Gastrocnemius medialis (tissue), 4 donors: ENCODE measurements at regions of chr4 and their contacts with region 1.

Region 1: DNA sequence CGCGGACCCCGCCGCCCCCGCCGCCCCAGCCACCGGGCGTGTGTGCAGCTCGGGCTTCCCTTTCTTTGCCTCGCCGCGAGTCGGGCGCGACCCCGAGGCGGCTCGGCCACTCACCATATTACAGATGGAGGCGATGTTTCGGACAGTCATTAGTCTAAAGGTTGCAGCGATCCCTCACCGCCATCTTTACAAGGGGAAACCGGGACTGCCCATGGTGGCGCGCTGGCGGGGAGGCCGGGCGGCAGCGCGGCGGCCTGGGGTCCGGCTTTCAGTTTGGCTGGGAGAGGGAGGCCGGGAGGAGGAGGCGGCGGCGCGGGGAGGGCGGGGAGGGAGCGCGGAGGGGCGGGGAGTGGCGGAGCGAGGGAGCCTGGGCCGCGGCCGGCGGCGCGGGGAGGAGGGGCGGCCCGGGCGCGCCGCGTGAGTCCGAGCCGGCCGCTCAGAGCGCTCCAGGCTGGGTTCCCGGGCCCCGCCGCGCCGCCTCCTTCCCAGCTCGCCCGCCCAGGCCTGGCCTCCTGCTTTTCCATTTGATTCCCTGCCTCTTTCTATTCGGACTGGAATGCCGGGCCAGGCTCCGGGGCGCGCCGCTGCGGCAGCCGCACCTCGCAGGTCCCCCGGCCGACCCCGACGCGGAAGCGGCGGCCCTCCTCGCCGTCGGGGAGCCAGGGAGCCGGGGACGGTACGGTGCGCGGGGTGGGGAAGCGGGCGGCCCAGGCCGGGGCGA is at the start of gene USP46:
- DNase-seq: peak; percentile 60 to 64
- ATAC-seq: peak; percentile 68 to 73
- H3K4me3 ChIP-seq: peak within 1 kb of the TSS; percentile 58 to 96 (median 78)
- H3K27ac ChIP-seq: peak within 1 kb of the TSS; percentile 89 to 99 (median 91)
- H3K4me1 ChIP-seq: peaks cover 34 to 41% of the 10 kb centered on the region in 2 donors
- H3K27me3 ChIP-seq: no peaks in the 10 kb centered on the region
- CTCF ChIP-seq: no peak
- POLR2A ChIP-seq: peak; percentile 65 to 68
- total RNA-seq, gene USP46: 8.9 to 13.2 (median 11.8) TPM

Region 2: GRCh38 chr4:52376132-52376704 is 282.9 kb before region 1 on chr4:
- in situ Hi-C with region 1: no loop called
- intact Hi-C with region 1: loop called (anchors 5 kb)
- DNase-seq: no peak
- ATAC-seq: no peak
- H3K4me3 ChIP-seq: no peak overlapping the region
- H3K27ac ChIP-seq: no peak overlapping the region
- H3K4me1 ChIP-seq: no peaks in the 10 kb centered on the region
- H3K27me3 ChIP-seq: no peaks in the 10 kb centered on the region
- CTCF ChIP-seq: peak; percentile 32 to 63 (median 42)
- POLR2A ChIP-seq: no peak

Region 3: DNA sequence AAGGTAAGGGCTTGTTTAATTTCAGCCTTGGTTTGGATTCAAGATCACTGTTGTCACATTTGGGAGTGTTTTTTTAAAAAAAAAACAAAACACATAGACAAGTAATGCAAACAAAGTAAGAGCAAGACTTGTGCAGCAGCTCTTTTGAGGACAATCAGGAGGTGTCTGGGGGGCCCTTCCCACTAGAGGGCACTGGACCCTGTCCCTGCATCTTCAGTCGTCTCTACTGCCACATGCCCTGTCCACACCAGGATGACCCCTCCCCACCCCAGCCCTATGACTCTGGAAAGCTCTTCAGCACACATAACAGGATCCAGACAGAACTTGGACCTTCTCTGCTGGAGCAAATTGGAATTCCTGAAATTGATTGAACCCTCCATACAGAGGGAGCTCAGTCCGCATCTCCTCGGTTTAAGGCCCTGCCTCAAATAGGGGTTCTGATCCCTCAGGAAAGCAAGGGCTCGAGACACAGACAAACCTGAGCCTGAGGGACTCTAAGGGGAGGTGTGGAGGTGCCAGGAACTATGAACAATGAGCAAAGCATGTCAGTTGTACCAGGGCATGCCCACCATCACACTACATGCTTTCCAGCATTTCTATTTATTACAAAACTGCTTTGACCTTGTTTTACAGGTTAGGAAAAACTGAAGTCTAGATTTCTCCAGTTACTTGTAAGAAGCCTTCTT is 70.9 kb before region 1 on chr4:
- in situ Hi-C with region 1: no loop called
- intact Hi-C with region 1: loop called (anchors 2 kb)
- DNase-seq: peak in 1 of 2 donors; percentile 30
- ATAC-seq: peak in 1 of 2 donors; percentile 42
- H3K4me3 ChIP-seq: no peak overlapping the region
- H3K27ac ChIP-seq: no peak overlapping the region
- H3K4me1 ChIP-seq: no peaks in the 10 kb centered on the region
- H3K27me3 ChIP-seq: no peaks in the 10 kb centered on the region
- CTCF ChIP-seq: peak; percentile 18 to 63 (median 49)
- POLR2A ChIP-seq: no peak

Region 4: DNA sequence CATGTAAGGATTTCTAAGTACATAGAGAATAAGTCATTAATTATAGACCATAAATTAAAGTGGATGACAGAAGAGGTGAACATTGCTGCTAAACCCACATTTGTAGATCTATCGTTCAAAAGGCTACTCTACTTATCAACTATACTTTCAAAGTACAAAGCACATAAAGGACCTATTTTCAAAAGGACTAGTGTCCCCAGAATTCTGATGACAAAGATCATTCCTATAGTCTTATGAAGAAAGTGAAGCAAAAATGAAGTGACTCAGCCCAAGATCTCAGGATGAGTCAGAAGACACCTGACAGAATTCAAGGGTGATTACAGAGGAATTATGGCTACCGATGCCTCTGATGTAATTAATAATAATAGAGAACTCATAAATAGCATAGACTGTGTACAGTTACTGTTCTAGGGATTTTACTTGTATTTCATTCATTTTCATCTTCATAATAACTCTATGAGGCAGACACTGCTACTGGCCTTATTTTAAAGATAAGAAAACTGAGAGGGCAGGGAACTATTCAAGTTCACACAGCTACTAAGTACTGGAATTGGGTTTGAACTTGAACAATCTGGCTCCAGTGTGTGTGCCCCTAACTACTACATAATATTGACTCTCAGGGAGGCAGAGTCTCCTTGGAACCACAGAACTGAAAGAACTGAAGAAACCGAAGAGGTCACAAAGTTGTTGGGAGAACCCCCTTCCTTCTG is 17.2 kb before region 1 on chr4:
- in situ Hi-C with region 1: no loop called
- intact Hi-C with region 1: loop called (anchors 2 kb)
- DNase-seq: no peak
- ATAC-seq: no peak
- H3K4me3 ChIP-seq: no peak overlapping the region
- H3K27ac ChIP-seq: peak overlapping the region in 1 of 4 donors; percentile 22
- H3K4me1 ChIP-seq: peaks cover 39 to 46% of the 10 kb centered on the region in 2 donors
- H3K27me3 ChIP-seq: no peaks in the 10 kb centered on the region
- CTCF ChIP-seq: no peak
- POLR2A ChIP-seq: no peak

Region 5: DNA sequence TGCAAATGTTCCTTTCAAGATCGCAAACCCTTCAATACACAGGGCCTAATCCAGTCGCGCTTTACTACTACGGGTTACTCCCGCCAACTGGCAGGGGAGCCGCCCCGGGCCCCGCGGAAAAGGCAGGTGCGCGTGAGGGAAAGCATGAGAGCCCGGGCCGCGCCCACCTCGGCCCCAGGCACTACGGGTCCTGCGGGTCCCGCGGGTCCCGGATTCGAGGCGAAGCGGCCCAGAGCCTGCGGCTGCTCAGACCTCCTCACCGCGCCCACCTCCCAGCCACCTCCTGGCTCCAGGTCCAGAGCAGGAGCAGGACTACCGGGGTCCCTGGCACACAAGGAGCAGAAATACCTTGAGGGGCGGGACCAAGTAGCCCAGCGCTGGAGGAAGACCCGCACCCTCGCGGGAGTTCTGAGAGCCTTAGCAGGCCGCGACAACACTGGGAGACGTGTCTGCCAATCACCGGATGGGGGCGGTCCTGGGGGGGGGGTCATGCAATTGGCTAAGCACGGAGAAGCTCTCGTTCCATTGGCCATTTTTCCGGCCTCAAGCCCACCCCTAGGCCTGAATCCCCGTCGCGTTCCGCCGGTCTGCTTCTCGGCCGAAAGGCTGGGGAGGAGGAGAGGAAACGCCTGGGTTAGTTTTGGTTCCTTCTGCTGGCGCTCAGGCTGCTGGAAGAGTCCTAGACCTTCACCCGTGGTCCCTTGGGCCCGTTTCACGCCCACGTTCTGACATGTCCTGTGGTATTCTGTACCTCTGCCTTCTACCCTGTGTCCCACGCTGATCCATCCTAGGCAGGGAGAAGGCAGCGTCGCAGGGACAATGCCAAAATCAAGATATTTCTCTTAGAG is 63.0 kb after region 1 on chr4:
- in situ Hi-C with region 1: loop called in 2 of 4 experiments (anchors 10 kb)
- intact Hi-C with region 1: loop called (anchors 2 kb)
- DNase-seq: peak; percentile 93 to 94
- ATAC-seq: peak; percentile 99
- H3K4me3 ChIP-seq: peak overlapping the region; percentile 74 to 96 (median 79)
- H3K27ac ChIP-seq: peak overlapping the region; percentile 83 to 96 (median 92)
- H3K4me1 ChIP-seq: peaks cover 7% of the 10 kb centered on the region in 2 donors
- H3K27me3 ChIP-seq: no peaks in the 10 kb centered on the region
- CTCF ChIP-seq: no peak
- POLR2A ChIP-seq: peak; percentile 32 to 61

Region 6: DNA sequence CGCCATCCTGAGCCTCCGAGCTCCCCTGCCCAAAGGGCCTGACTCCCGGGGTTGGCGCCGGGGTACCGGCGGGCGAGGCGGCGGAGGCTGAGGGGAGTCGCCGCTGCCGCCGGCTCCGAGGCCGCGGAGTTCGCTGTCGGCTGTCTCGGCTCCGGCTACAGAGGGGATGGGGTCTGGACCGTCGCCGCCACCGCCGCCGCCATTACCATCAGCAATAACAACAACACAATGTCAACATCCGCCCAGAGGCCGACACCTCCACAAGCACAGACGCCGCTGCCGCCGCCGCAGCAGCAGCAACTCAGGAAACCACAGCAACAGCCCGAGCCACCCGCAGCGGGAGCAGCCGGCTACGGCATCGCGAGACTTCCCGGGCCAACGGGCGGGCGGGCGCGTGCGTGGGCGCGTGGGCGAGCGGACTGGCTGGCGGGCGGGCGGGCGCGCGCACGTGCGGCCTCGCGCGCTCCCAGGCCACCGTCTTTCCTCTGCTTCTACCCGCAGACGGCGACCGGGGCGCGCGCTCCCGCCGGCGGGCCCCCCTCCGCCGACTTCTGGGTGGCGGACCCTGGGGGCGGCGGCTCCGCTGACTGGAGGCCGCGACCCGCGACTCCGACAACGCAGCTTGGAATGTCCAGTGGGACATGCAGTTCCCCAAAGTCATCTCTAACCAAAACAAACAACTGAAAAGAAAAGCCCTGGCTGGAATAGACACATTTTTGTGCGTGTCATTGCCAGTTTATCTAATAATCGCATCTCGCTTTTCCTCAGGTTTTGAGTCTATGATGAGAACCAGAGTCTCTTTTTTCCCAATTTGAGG is 1405.3 kb after region 1 on chr4 and contains the start of gene CHIC2:
- in situ Hi-C with region 1: no loop called
- intact Hi-C with region 1: loop called (anchors 10 kb)
- DNase-seq: peak; percentile 90 to 92
- ATAC-seq: peak; percentile 90 to 91
- H3K4me3 ChIP-seq: peak within 1 kb of the TSS; percentile 89 to 98 (median 94)
- H3K27ac ChIP-seq: peak within 1 kb of the TSS; percentile 83 to 94 (median 89)
- H3K4me1 ChIP-seq: peaks cover 45 to 46% of the 10 kb centered on the region in 2 donors
- H3K27me3 ChIP-seq: no peaks in the 10 kb centered on the region
- CTCF ChIP-seq: peak in 1 of 5 experiments; percentile 8
- POLR2A ChIP-seq: peak; percentile 93 to 98
- total RNA-seq, gene CHIC2: 11.9 to 18.6 (median 15.5) TPM